ENCODE measurements at regions of chr7 and their contacts with region 1.

Region 1: DNA sequence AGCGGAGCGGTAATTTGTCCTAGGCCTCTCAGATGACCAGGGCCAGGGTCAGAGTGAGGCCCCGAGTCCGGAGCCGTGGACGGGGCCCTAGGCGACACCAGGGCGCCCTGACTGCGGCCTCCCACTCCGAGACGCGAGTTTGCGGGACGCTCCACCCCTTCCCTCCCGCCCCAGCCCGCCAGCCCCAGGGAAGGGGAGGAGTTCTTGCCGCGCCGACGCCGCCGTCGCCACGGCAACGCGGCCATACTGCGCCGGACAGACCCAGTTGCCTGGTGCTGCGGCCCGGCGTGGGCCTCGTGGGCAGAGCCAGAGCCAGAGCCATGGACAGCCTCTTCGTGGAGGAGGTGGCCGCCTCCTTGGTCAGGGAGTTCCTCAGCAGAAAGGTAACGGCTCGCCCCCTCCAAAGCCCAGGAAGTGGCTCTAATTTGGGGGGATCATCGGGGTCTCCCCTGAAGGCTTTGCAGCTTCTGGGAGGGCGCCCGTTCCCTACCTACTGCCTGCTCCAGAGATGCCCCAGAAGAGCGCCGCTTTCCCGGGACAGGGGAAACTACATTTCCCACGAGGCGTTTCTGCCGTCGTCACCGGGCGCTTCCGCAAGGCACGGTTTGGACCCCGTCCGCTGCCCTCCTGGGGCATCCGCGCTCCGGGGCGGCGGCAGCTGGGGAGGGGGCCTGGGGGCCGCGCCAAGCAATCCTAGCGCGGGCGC is at the start of gene MINDY4:
- DNase-seq: peak; percentile 75
- H3K4me3 Mint-ChIP-seq: peak within 1 kb of the TSS; percentile 78
- H3K27ac Mint-ChIP-seq: peak within 1 kb of the TSS; percentile 28
- H3K4me1 Mint-ChIP-seq: peaks cover 9% of the 10 kb centered on the region
- H3K27me3 Mint-ChIP-seq: no peaks in the 10 kb centered on the region
- total RNA-seq, gene MINDY4: 1.2 to 1.4 TPM

Region 2: DNA sequence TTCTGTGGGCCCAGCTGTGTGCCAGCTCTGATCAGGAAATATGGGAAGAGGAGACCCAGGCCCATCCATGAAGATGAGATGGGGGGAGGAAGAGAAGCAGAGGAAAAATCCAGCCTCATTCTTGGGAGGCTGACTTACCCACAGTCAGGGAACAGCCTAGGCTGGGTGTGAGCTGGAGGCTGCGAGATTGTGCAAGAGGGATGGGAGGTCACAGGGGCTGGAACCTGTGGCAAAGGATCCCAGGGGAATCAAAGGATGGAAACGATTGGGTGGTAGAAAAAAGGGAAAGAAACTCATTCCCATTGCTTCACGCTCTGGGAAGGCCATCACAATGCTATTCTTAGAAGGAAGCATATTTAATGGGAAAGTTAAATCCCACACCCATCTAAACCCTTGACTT is 62.4 kb before region 1 on chr7:
- CTCF ChIA-PET with region 1: no interaction called
- intact Hi-C with region 1: no loop called
- DNase-seq: no peak
- H3K4me3 Mint-ChIP-seq: no peak overlapping the region
- H3K27ac Mint-ChIP-seq: no peak overlapping the region
- H3K4me1 Mint-ChIP-seq: no peaks in the 10 kb centered on the region
- H3K27me3 Mint-ChIP-seq: no peaks in the 10 kb centered on the region

Region 3: GRCh38 chr7:30800785-30801252 is 29.5 kb after region 1 on chr7:
- CTCF ChIA-PET with region 1: no interaction called
- intact Hi-C with region 1: loop called (anchors 2 kb)
- DNase-seq: peak; percentile 56
- H3K4me3 Mint-ChIP-seq: no peak overlapping the region
- H3K27ac Mint-ChIP-seq: no peak overlapping the region
- H3K4me1 Mint-ChIP-seq: peaks cover 13% of the 10 kb centered on the region
- H3K27me3 Mint-ChIP-seq: no peaks in the 10 kb centered on the region

Measured in activated naive CD4-positive, alpha-beta T cell treated with anti-CD3 and anti-CD28 coated beads for 36 hours (primary cell).